CD4-positive, alpha-beta memory T cell (primary cell): ENCODE measurements at regions of chr1 and their contacts with region 1.

Region 1: GRCh38 chr1:66446261-66447001 is 87.5 kb upstream of the SGIP1 start:
- DNase-seq: peak; percentile 57 to 76 (median 75)
- H3K4me3 ChIP-seq: peak overlapping the region in 1 of 2 donors; percentile 21
- H3K4me3 Mint-ChIP-seq: peak overlapping the region in 7 of 8 donors; percentile 36 to 84 (median 68)
- H3K27ac ChIP-seq: peak overlapping the region; percentile 48
- H3K27ac Mint-ChIP-seq: peak overlapping the region; percentile 73 to 95 (median 90)
- H3K4me1 ChIP-seq: peaks cover 23% of the 10 kb centered on the region
- H3K4me1 Mint-ChIP-seq: peaks cover 19 to 25% (median 21%) of the 10 kb centered on the region in 4 donors
- H3K27me3 ChIP-seq: no peaks in the 10 kb centered on the region
- H3K27me3 Mint-ChIP-seq: peaks cover 1 to 4% of the 10 kb centered on the region in 2 donors

Region 2: DNA sequence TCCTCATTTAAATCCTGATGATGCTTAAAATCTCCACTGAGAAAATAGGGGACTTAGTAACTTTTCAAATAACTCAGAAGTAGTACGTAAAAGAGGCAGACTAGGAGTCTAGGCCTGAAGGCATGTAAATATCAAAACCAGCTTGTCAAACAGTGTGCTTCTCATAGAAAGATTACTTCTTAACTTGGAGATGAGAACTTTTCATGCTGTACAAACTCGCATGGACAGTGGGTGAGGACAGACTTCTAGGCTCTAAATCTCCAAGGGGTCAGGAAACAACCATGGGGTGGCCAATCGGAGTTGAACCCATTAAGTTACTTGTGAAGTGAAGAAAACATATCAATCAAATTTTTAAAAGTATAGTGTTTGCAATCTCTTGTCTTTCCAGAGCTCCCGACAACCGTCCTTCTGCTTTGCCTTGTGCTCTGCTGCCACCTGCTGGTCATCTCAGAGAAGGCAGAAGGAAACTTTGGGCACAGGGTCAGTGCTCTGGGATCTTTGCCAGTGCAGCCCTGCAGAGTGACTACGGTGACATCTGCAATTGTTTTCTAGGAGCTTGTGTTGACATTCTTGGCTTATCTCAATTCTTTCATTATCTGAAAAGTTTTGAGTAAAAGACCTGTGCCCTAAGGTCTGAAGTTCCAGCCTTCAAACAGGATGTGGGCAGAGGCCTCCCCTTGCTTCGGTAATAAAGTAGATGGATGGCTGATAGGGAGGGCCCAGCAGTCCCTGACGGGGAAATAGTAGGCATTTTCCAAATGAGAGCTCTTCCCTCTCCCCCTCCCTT is 758.8 kb before region 1 on chr1:
- CTCF ChIA-PET with region 1: interaction called, 3 read pairs
- POLR2A ChIA-PET with region 1: no interaction called
- intact Hi-C with region 1: loop called (anchors 10 kb)
- DNase-seq: peak; percentile 54 to 75 (median 66)
- H3K4me3 ChIP-seq: no peak overlapping the region
- H3K4me3 Mint-ChIP-seq: no peak overlapping the region
- H3K27ac ChIP-seq: no peak overlapping the region
- H3K27ac Mint-ChIP-seq: no peak overlapping the region
- H3K4me1 ChIP-seq: peaks cover 8% of the 10 kb centered on the region
- H3K4me1 Mint-ChIP-seq: peaks cover 0 to 9% (median 4%) of the 10 kb centered on the region in 4 donors
- H3K27me3 ChIP-seq: no peaks in the 10 kb centered on the region
- H3K27me3 Mint-ChIP-seq: peaks cover 6 to 10% of the 10 kb centered on the region in 2 donors

Region 3: GRCh38 chr1:65965112-65966008 is 481.1 kb before region 1 on chr1:
- CTCF ChIA-PET with region 1: interaction called, 109 read pairs
- POLR2A ChIA-PET with region 1: no interaction called
- intact Hi-C with region 1: no loop called
- DNase-seq: no peak
- H3K4me3 ChIP-seq: no peak overlapping the region
- H3K4me3 Mint-ChIP-seq: no peak overlapping the region
- H3K27ac ChIP-seq: no peak overlapping the region
- H3K27ac Mint-ChIP-seq: no peak overlapping the region
- H3K4me1 ChIP-seq: no peaks in the 10 kb centered on the region
- H3K4me1 Mint-ChIP-seq: no peaks in the 10 kb centered on the region
- H3K27me3 ChIP-seq: no peaks in the 10 kb centered on the region
- H3K27me3 Mint-ChIP-seq: peaks cover 2 to 3% of the 10 kb centered on the region in 2 donors

Region 4: DNA sequence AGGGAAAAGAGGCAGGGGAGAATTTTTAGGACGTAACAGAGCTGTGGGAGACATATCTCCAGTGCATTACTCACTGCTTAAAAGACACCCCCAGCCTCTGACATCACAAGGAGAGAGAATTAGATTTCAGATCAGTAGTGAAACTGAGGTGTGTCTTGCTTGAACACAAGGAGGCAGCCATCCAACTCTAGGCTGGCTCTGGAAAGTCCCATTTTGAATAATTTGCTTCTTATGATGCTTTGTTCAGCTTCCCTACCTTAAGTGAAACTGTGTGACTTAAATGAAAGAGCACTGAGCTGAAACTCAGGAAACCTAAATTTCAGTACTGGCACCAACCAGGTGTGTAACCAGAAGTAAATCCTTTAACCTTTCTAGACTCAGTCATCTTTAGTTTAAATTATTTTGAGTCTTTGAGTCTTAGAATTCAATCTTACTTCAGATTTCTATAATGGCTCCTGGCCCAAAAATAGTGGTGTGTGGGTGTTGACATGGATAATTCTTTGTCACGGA is 164.0 kb before region 1 on chr1:
- CTCF ChIA-PET with region 1: interaction called, 63 read pairs
- POLR2A ChIA-PET with region 1: interaction called, 8 read pairs
- intact Hi-C with region 1: loop called (anchors 1 kb)
- DNase-seq: peak; percentile 71 to 89 (median 79)
- H3K4me3 ChIP-seq: no peak overlapping the region
- H3K4me3 Mint-ChIP-seq: peak overlapping the region in 4 of 8 donors; percentile 12 to 67 (median 42)
- H3K27ac ChIP-seq: peak overlapping the region; percentile 57
- H3K27ac Mint-ChIP-seq: peak overlapping the region; percentile 93 to 97 (median 95)
- H3K4me1 ChIP-seq: peaks cover 90% of the 10 kb centered on the region
- H3K4me1 Mint-ChIP-seq: peaks cover 70 to 93% (median 83%) of the 10 kb centered on the region in 4 donors
- H3K27me3 ChIP-seq: no peaks in the 10 kb centered on the region
- H3K27me3 Mint-ChIP-seq: peaks cover 0 to 3% of the 10 kb centered on the region in 2 donors

Region 5: GRCh38 chr1:66331657-66332547 is 114.5 kb before region 1 on chr1:
- CTCF ChIA-PET with region 1: interaction called, 88 read pairs
- POLR2A ChIA-PET with region 1: interaction called, 36 read pairs
- intact Hi-C with region 1: loop called (anchors 1 kb)
- DNase-seq: peak; percentile 41 to 71 (median 45)
- H3K4me3 ChIP-seq: peak overlapping the region; percentile 79 to 96
- H3K4me3 Mint-ChIP-seq: peak overlapping the region; percentile 99 to 100 (median 100)
- H3K27ac ChIP-seq: peak overlapping the region; percentile 85
- H3K27ac Mint-ChIP-seq: peak overlapping the region; percentile 97 to 100 (median 98)
- H3K4me1 ChIP-seq: peaks cover 53% of the 10 kb centered on the region
- H3K4me1 Mint-ChIP-seq: peaks cover 26 to 78% (median 46%) of the 10 kb centered on the region in 4 donors
- H3K27me3 ChIP-seq: no peaks in the 10 kb centered on the region
- H3K27me3 Mint-ChIP-seq: no peaks in the 10 kb centered on the region

Region 6: GRCh38 chr1:66374561-66375111 is 71.8 kb before region 1 on chr1:
- CTCF ChIA-PET with region 1: interaction called, 48 read pairs
- POLR2A ChIA-PET with region 1: interaction called, 4 read pairs
- intact Hi-C with region 1: loop called (anchors 5 kb)
- DNase-seq: peak; percentile 51 to 66 (median 54)
- H3K4me3 ChIP-seq: no peak overlapping the region
- H3K4me3 Mint-ChIP-seq: peak overlapping the region; percentile 47 to 86 (median 68)
- H3K27ac ChIP-seq: peak overlapping the region; percentile 58
- H3K27ac Mint-ChIP-seq: peak overlapping the region; percentile 81 to 99 (median 93)
- H3K4me1 ChIP-seq: peaks cover 69% of the 10 kb centered on the region
- H3K4me1 Mint-ChIP-seq: peaks cover 58 to 72% (median 65%) of the 10 kb centered on the region in 4 donors
- H3K27me3 ChIP-seq: no peaks in the 10 kb centered on the region
- H3K27me3 Mint-ChIP-seq: no peaks in the 10 kb centered on the region